ENCODE measurements at regions of chr1 and their contacts with region 1.

Region 1: GRCh38 chr1:28470146-28470545 is 35.7 kb upstream of the RCC1 start:
- DNase-seq: no peak
- H3K4me3 Mint-ChIP-seq: no peak overlapping the region
- H3K27ac Mint-ChIP-seq: no peak overlapping the region
- H3K4me1 Mint-ChIP-seq: peaks cover 15% of the 10 kb centered on the region
- H3K27me3 Mint-ChIP-seq: no peaks in the 10 kb centered on the region

Region 2: DNA sequence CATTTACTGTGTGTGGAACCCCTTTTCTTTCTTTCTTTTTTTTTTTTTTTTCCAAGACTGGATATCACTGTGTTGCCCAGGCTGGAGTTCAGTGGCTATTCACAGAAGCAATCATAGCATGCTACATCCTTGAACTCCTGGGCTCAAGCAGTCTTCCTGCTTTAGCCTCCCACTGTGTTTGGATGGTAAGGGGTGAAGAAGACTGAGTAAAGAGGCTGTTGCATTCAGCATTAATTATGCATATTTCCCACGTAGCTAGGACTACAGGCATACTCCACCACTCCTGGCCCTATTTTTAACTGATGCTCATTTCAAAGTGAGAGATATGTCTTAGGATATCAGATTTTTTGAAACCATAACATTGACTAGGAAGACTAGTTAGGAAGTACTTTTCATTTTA is 61.1 kb before region 1 on chr1:
- intact Hi-C with region 1: loop called (anchors 5 kb)
- DNase-seq: no peak
- H3K4me3 Mint-ChIP-seq: no peak overlapping the region
- H3K27ac Mint-ChIP-seq: no peak overlapping the region
- H3K4me1 Mint-ChIP-seq: no peaks in the 10 kb centered on the region
- H3K27me3 Mint-ChIP-seq: no peaks in the 10 kb centered on the region

Measured in activated T-helper 1 cell treated with anti-CD3 and anti-CD28 coated beads, Interleukin-12 subunit alpha, Interleukin-12 subunit beta, Interleukin-2, Interleukin-4 antibody, amounts not matched to agents 30 ng/mL and 10 ng/mL and 1 ng/mL, durations not matched to agents 14 hours and 24 hours and 36 hours (primary cell).